ENCODE measurements at regions of chr16 and their contacts with region 1.

Region 1: DNA sequence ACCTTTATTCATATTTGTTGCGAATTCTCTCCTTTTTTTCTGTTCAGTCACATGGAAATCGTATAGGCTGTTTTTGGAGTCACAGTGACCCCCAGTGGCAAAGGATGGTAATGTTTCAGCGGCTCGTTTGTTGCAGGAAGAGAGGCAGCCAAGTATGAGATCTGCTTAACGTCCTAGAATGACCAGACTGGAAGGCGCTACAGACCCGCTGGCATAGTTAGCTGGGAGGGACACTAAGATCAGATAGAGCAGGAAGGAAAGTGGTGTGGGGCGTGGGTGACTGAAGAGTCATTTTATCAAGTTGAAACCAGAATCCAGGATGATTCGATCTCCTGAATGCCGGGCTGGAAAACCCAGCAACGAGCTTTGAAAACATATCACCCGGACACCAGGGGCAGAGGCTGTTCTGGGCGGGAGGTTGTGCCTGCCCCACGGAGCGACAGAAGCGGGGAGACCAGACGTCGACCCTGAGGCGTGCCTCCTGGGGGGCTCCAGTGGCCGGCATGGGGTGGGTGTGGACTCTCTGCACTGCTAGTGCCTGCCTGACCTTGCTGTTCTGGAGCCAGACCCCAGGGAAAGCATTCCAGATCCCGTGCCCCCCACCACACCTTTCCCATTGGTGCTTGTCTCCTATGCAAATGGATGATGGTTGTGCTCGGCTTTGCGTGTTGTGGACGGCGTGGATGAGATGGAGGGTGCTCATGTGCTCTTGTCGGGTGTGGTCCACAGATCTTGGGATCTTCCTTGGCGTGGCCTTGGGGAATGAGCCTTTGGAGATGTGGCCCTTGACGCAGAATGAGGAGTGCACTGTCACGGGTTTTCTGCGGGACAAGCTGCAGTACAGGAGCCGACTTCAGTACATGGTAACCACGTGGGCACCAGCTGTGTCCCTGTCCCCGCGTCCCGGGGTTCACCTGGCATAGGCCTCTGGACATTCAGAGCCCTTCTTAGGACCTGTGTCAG is 7.7 kb downstream of the IL34 start:
- DNase-seq: peak; percentile 49 to 54 (median 50)
- H3K4me3 ChIP-seq: no peak overlapping the region
- H3K4me3 Mint-ChIP-seq: peak overlapping the region; percentile 40 to 81
- H3K27ac ChIP-seq: no peak overlapping the region
- H3K27ac Mint-ChIP-seq: peak overlapping the region in 2 of 7 donors; percentile 0 to 82
- H3K4me1 ChIP-seq: peaks cover 4% of the 10 kb centered on the region in 2 donors
- H3K4me1 Mint-ChIP-seq: peaks cover 8% of the 10 kb centered on the region
- H3K27me3 ChIP-seq: no peaks in the 10 kb centered on the region
- H3K27me3 Mint-ChIP-seq: peaks cover 4 to 7% (median 5%) of the 10 kb centered on the region in 3 donors
- CTCF ChIP-seq: peak; percentile 86

Region 2: GRCh38 chr16:70162041-70162451 is 492.0 kb before region 1 on chr16:
- intact Hi-C with region 1: loop called in 1 of 2 experiments (anchors 10 kb)
- DNase-seq: no peak
- H3K4me3 ChIP-seq: no peak overlapping the region
- H3K4me3 Mint-ChIP-seq: no peak overlapping the region
- H3K27ac ChIP-seq: no peak overlapping the region
- H3K27ac Mint-ChIP-seq: peak overlapping the region in 4 of 7 donors; percentile 3 to 53 (median 26)
- H3K4me1 ChIP-seq: no peaks in the 10 kb centered on the region
- H3K4me1 Mint-ChIP-seq: peaks cover 4% of the 10 kb centered on the region
- H3K27me3 ChIP-seq: no peaks in the 10 kb centered on the region
- H3K27me3 Mint-ChIP-seq: peaks cover 3 to 4% (median 4%) of the 10 kb centered on the region in 3 donors
- CTCF ChIP-seq: no peak

Region 3: GRCh38 chr16:70508752-70509151 is 145.3 kb before region 1 on chr16:
- intact Hi-C with region 1: loop called in 1 of 2 experiments (anchors 10 kb)
- DNase-seq: peak in 1 of 3 donors; percentile 20
- H3K4me3 ChIP-seq: no peak overlapping the region
- H3K4me3 Mint-ChIP-seq: no peak overlapping the region
- H3K27ac ChIP-seq: no peak overlapping the region
- H3K27ac Mint-ChIP-seq: peak overlapping the region in 1 of 7 donors; percentile 26
- H3K4me1 ChIP-seq: peaks cover 0 to 3% of the 10 kb centered on the region in 2 donors
- H3K4me1 Mint-ChIP-seq: peaks cover 5% of the 10 kb centered on the region
- H3K27me3 ChIP-seq: no peaks in the 10 kb centered on the region
- H3K27me3 Mint-ChIP-seq: no peaks in the 10 kb centered on the region
- CTCF ChIP-seq: peak; percentile 21